Ascending aorta (tissue), 2 donors: ENCODE measurements at regions of chr22 and their contacts with region 1.

Region 1: DNA sequence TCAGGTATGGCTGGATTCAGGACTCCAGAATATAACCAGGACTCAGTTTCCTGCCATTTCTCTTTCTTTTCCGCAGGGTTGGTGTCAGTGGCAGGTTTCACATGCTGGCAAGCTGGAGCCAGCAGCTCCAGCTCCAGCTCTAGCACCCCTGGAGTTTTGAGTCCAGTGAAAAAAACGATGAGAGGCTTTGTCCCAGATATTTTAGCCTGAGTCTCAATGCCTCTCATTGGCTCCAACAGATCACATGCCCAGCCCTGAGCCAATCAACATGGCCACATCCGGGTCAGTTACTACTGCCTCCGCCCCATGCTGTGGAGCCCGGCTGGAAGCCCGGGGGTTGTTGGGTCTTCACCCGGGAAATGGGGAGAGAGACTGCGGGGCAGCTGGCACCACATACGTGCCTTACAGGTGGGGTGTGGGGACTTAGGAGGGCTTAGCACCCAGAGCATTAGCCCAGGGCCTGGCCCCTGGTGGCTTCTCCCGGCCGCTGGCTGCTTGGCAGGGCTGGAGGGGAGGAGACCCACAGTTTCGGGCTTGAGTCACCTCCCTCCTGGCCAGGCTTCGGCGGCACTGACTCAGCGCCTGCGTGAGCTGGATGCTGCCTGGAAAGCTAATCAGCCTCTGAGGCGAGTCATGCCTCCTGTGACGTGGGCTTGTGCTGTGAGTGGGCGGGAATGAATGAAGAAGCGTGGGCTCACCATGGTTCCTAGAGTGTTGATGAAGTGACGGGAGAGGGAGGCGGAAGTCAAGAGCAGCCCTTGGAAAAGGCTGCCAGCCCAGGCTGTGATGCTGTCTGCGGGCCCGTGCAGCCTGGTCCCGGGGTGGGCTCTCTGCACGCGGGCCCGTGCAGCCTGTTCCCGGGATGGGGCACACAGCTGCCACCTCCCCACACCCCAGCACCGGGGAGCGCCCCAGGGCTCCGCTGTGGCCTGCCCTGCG is 15.3 kb upstream of the MRTFA start:
- DNase-seq: peak; percentile 95 to 99
- H3K4me3 ChIP-seq: peak overlapping the region; percentile 68 to 70
- H3K27ac ChIP-seq: peak overlapping the region; percentile 97
- H3K4me1 ChIP-seq: peaks cover 5 to 26% of the 10 kb centered on the region in 2 donors
- H3K27me3 ChIP-seq: no peaks in the 10 kb centered on the region
- CTCF ChIP-seq: peak in 1 of 3 experiments; percentile 4

Region 2: GRCh38 chr22:40396882-40397281 is 254.9 kb before region 1 on chr22:
- intact Hi-C with region 1: no loop called
- DNase-seq: peak in 1 of 2 donors; percentile 59
- H3K4me3 ChIP-seq: no peak overlapping the region
- H3K27ac ChIP-seq: no peak overlapping the region
- H3K4me1 ChIP-seq: no peaks in the 10 kb centered on the region
- H3K27me3 ChIP-seq: no peaks in the 10 kb centered on the region
- CTCF ChIP-seq: no peak

Region 3: DNA sequence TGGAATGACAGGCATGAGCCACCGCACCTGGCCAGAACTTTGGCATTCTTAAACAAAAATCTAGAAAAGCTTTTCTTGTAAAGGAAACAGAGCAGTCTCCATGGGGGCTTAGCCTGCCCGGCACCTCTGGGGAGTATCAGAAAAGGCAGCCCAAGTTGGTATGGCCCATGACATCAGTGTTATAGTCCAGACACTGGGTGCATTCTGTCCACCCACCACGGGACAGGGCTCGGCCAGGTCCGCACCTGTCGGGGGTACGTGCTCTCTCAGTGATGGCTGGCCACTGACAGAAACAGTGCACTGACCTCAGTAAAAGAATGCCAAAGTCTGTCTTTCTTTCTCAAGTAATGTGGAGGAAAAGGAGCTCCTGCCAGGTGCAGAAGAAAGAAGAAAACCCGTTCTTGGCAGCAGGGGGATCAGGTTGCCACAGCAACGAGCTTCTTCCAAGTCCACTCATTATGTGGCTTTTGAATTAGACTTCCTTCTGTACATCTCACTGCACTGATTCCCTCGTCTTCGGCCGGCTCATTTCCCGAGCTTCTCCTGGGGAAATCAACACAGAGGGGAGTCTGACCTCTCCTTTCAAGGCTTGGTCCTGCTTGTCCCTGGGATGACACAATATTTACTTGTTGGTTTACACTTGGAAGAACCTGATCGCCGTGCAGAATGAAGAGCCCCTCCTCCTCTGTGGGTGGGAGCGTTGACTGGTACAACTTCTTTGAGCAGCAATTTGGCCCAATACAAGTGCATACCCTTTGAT is 62.5 kb after region 1 on chr22:
- intact Hi-C with region 1: loop called (anchors 5 kb)
- DNase-seq: no peak
- H3K4me3 ChIP-seq: no peak overlapping the region
- H3K27ac ChIP-seq: peak overlapping the region; percentile 16 to 32
- H3K4me1 ChIP-seq: peaks cover 14% of the 10 kb centered on the region in 2 donors
- H3K27me3 ChIP-seq: no peaks in the 10 kb centered on the region
- CTCF ChIP-seq: no peak

Region 4: GRCh38 chr22:40818747-40819598 is 167.1 kb after region 1 on chr22 and contains the start of gene SLC25A17:
- intact Hi-C with region 1: loop called (anchors 5 kb)
- DNase-seq: peak; percentile 32 to 92
- H3K4me3 ChIP-seq: peak within 1 kb of the TSS; percentile 82 to 90
- H3K27ac ChIP-seq: peak within 1 kb of the TSS; percentile 74 to 78
- H3K4me1 ChIP-seq: peaks cover 0 to 13% of the 10 kb centered on the region in 2 donors
- H3K27me3 ChIP-seq: no peaks in the 10 kb centered on the region
- CTCF ChIP-seq: peak in 2 of 3 experiments; percentile 23 to 51
- total RNA-seq, gene SLC25A17: 62.1 TPM